ENCODE measurements at regions of chr14 and their contacts with region 1.

Region 1: GRCh38 chr14:100239840-100240724 is 1.1 kb downstream of the YY1 start:
- DNase-seq: peak; percentile 91 to 96
- ATAC-seq: peak; percentile 75 to 81 (median 80)
- H3K4me3 ChIP-seq: peak overlapping the region; percentile 99
- H3K27ac ChIP-seq: peak overlapping the region; percentile 100
- H3K4me1 ChIP-seq: peaks cover 53% of the 10 kb centered on the region
- H3K27me3 ChIP-seq: no peaks in the 10 kb centered on the region
- CTCF ChIP-seq: peak; percentile 75

Region 2: GRCh38 chr14:99575043-99576023 is 664.7 kb before region 1 on chr14:
- intact Hi-C with region 1: no loop called
- DNase-seq: no peak
- ATAC-seq: peak; percentile 43 to 63 (median 45)
- H3K4me3 ChIP-seq: no peak overlapping the region
- H3K27ac ChIP-seq: peak overlapping the region; percentile 61
- H3K4me1 ChIP-seq: peaks cover 74% of the 10 kb centered on the region
- H3K27me3 ChIP-seq: no peaks in the 10 kb centered on the region
- CTCF ChIP-seq: no peak

Region 3: DNA sequence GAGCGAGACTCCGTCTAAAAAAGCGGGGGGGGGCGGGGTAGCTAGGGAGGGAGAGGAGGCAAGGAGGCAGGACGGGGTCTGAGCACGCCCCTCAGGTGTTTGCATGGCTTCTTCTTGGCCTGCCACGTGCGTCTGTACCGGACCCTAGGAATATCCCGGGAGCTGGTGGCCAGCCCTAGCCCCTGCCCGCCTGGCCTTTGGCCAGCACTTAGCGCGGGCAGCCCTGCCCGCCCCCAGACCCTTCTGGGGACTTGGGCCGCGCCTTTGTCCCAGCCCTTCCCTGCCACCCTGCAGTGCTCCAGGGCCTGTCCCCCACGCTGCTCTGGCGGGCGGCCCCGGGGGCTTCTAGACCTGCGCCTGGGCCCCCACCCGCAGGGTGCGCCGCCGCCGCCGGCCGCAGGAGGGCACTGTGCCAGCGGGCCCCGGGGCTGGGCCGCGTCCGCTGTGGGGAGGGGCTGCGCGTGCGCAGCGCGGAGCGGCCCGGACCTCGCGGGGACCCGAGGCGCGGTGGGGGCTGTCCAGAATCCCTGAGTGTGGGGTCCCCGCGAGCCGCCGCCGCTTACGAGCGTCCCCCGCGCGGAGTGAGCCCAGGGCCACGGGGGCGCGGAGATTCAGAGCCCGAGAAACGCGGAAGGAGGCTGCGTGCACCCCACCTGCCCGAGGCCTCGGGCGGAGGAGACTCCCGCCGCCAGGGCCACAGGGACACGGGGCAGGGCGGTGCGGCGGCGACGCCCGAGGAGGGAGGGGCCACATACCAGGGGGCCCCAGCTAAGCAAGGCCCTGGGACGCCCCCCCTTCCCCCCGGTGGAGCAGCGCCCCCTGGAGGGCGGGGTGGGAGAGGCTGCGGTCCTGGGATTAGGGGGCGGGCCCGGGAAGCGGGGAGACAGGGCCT is 45.2 kb after region 1 on chr14:
- intact Hi-C with region 1: loop called in 1 of 2 experiments (anchors 5 kb)
- DNase-seq: peak; percentile 75 to 86
- ATAC-seq: peak; percentile 83 to 86 (median 84)
- H3K4me3 ChIP-seq: peak overlapping the region; percentile 88
- H3K27ac ChIP-seq: peak overlapping the region; percentile 93
- H3K4me1 ChIP-seq: peaks cover 47% of the 10 kb centered on the region
- H3K27me3 ChIP-seq: no peaks in the 10 kb centered on the region
- CTCF ChIP-seq: peak; percentile 67

Region 4: GRCh38 chr14:100306420-100307219 is 66.5 kb after region 1 on chr14 and contains the start of gene SLC25A29:
- intact Hi-C with region 1: loop called (anchors 5 kb)
- DNase-seq: peak; percentile 93 to 94
- ATAC-seq: peak; percentile 93 to 95 (median 94)
- H3K4me3 ChIP-seq: peak within 1 kb of the TSS; percentile 95
- H3K27ac ChIP-seq: peak within 1 kb of the TSS; percentile 82
- H3K4me1 ChIP-seq: peaks cover 24% of the 10 kb centered on the region
- H3K27me3 ChIP-seq: no peaks in the 10 kb centered on the region
- CTCF ChIP-seq: no peak
- total RNA-seq, gene SLC25A29: 5.0 to 14.8 (median 7.5) TPM